Aorta (tissue), 5 donors: ENCODE measurements at regions of chr9 and their contacts with region 1.

Region 1: DNA sequence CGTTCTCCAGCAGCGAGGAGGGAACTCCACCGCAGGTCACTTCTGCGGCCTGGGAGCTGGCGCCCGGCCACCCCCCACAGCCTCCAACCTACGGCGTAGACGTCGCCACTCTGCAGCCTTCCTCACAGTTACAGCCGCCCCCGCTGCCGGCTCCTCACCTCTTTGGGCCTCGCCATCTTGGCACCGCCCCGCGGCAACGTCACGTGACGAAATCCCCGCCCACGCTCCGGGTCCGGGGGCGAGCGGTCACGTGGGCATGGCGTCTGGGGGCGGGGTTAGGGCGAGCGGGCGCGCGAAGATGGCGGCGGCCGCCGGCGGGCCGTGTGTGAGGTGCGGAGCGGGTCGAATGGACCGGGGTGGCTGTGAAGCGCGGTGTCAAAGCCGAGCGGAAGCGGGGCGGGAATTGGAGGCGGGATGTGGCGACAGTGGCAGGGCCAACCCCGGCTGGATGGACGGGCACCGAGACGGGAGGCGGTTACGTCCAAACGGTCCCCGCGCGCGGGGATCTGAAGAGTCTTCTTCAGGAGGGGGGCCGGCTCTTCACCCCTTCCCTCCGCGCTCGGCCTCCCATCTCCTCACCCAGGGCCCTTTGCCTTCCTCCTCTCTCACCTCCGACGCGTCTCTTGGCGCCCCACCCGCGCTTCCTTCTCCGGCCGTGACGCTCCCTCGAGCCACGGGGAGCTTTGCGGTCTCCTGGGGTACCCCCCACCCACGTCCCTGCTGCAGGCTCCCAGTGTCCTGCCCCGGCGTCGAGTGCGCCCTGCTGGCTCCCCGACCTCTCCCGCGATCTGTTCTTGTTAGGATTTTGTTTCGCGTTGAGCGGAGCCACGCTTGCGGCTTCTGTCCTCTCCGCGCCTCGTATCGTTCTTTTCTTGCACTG is at the starts of genes DOLK and NUP188:
- DNase-seq: peak; percentile 97 to 100
- ATAC-seq: peak; percentile 97
- H3K4me3 ChIP-seq: peak within 1 kb of the TSS; percentile 50 to 52
- H3K27ac ChIP-seq: peak within 1 kb of the TSS; percentile 6 to 69
- H3K4me1 ChIP-seq: no peaks in the 10 kb centered on the region
- H3K27me3 ChIP-seq: no peaks in the 10 kb centered on the region
- total RNA-seq, gene DOLK: 8.4 to 10.5 TPM
- total RNA-seq, gene NUP188: 37.1 to 44.5 TPM

Region 2: GRCh38 chr9:128987805-128988204 is 40.1 kb after region 1 on chr9:
- intact Hi-C with region 1: no loop called
- DNase-seq: peak; percentile 81 to 87
- ATAC-seq: peak; percentile 41
- H3K4me3 ChIP-seq: no peak overlapping the region
- H3K27ac ChIP-seq: peak overlapping the region; percentile 20 to 92
- H3K4me1 ChIP-seq: peaks cover 0 to 3% of the 10 kb centered on the region in 2 donors
- H3K27me3 ChIP-seq: no peaks in the 10 kb centered on the region

Region 3: DNA sequence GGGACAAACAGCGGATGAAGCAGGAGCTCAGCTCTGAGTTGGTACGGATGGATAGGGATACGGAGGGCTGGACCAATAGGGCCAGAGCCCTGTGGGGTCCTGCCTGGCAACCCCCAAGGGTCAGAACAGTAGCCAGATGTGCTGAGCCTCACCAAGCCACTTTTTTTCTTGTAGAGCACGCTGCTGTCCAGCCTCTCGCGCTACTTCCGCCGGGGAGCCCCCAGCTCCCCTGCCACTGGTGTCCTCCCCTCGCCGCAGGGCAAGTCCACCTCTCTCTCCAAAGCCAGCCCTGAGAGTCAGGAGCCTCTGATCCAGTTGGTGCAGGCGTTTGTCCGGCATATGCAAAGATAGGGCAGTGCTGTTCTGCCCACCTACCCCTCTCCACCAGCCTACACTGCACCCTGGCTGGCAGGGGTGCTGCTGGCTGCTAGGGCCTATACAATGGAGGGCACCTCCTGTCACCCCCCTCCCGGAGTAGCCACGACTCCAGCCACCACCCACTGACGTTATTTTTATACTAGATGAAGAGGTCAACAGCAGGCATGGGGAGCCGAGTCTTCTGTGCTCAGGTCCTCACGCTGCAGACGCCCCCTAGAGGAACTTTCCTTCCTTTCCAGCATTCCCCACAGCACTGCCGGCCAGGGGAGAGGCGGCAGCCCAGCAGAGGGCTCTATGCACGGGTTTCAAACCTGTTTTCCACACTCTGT is 58.8 kb after region 1 on chr9:
- intact Hi-C with region 1: loop called in 1 of 2 experiments (anchors 5 kb)
- DNase-seq: peak; percentile 65 to 85
- ATAC-seq: peak; percentile 85
- H3K4me3 ChIP-seq: no peak overlapping the region
- H3K27ac ChIP-seq: peak overlapping the region in 1 of 2 donors; percentile 1
- H3K4me1 ChIP-seq: no peaks in the 10 kb centered on the region
- H3K27me3 ChIP-seq: no peaks in the 10 kb centered on the region

Region 4: GRCh38 chr9:129036241-129036922 is 88.7 kb after region 1 on chr9 and contains the start of gene MIGA2:
- intact Hi-C with region 1: loop called in 1 of 2 experiments (anchors 5 kb)
- DNase-seq: peak; percentile 97 to 98
- ATAC-seq: peak; percentile 98
- H3K4me3 ChIP-seq: peak within 1 kb of the TSS; percentile 68 to 85
- H3K27ac ChIP-seq: peak within 1 kb of the TSS in 1 of 2 donors; percentile 58
- H3K4me1 ChIP-seq: no peaks in the 10 kb centered on the region
- H3K27me3 ChIP-seq: no peaks in the 10 kb centered on the region
- total RNA-seq, gene MIGA2: 21.8 to 28.3 TPM